Activated CD8-positive, alpha-beta T cell treated with anti-CD3 and anti-CD28 coated beads for 36 hours (primary cell): ENCODE measurements at regions of chr3 and their contacts with region 1.

Region 1: DNA sequence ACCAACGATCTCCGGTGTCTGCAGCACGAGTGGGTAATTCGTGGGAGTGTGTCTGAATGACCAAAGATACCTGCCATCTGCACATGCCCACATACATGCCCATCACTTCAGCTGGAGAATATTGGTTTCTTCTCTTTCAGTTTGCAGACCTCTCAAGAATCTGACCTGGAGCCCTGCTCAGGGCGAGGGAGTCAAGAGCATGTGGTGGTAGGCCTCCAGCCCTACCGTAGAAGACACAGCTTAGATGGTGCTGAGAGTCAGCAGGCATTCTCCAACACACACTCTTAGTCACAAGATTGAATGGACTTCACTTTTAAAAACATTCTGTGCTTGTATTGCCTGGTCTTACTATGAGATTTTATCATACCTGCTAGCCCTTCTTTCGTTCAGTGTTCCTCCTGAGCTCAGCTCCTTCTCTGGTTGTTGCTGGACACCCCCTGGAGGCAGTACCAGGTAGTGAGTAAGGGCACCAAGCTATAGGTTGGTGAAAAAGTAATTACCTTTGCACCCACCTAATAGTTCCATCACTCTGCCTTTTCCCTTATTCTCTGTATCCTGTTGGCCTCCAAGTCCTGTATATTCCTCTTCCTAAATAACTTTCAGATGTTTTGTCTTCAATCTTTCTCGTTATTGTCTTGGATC is 252.0 kb downstream of the CACNA2D3 start:
- DNase-seq: peak; percentile 27
- ATAC-seq: no peak
- H3K4me3 Mint-ChIP-seq: no peak overlapping the region
- H3K27ac Mint-ChIP-seq: no peak overlapping the region
- H3K4me1 Mint-ChIP-seq: no peaks in the 10 kb centered on the region
- H3K27me3 Mint-ChIP-seq: no peaks in the 10 kb centered on the region
- CTCF ChIP-seq: peak; percentile 24

Region 2: DNA sequence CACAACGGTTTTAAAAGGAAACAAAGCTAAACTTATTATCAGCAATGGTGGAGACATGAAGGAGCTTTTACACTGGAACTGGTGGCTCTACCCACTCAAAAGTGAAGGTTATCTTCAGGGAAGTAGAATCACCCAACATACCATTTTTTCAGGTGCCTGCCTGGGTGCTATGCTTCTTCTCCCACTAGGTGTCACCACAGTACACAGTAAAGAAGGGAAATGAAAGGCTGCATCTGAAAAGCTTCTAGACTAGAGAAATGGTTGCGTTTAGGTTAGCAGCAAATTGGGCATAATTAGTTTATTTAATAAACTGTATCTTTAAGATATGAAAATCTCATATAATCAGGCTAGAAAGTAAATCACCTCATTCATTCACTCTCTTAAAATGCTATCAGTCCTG is 435.7 kb before region 1 on chr3:
- CTCF ChIA-PET with region 1: interaction called, 16 read pairs
- POLR2A ChIA-PET with region 1: no interaction called
- intact Hi-C with region 1: no loop called
- DNase-seq: peak; percentile 46
- ATAC-seq: peak; percentile 60
- H3K4me3 Mint-ChIP-seq: no peak overlapping the region
- H3K27ac Mint-ChIP-seq: no peak overlapping the region
- H3K4me1 Mint-ChIP-seq: no peaks in the 10 kb centered on the region
- H3K27me3 Mint-ChIP-seq: peaks cover 24% of the 10 kb centered on the region
- CTCF ChIP-seq: peak; percentile 86